AG04449 (cell line): ENCODE measurements at regions of chr17 and their contacts with region 1.

Region 1: GRCh38 chr17:17568749-17569195 is 22.7 kb downstream of the PEMT start:
- DNase-seq: no peak
- H3K4me3 ChIP-seq: no peak overlapping the region
- CTCF ChIP-seq: peak; percentile 88

Region 2: DNA sequence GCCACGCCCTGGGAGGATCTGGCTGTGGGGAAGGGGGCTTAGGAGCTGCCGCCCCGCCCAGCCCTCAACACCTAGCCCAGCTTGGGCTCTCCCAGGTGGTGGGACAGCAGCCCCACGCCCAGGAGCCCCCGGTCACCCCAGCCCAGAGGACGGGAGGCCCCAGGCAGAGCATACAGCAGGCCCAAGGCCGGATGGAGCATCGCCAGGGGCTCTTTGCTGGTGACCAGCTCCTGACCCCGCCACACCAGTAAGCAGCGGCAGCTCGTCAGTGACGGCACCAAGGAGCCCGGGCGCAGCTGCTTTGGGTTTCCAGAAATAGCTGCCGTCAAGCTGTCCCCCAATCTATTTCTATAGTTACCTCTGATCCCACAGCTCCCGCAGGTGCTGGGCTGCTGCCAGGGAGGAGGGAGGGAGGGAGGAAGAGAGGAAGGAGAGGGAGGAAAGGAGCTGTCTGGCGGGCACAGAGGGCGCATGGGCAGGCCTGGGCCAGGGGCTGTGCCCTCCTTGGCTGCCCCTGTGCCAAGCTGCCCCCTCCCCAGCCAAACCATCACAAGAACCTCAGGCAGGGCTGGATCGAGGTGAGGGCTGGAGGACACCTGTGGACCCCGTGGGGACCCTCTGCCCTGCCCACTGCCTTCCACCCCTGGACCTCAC is 61.8 kb before region 1 on chr17:
- CTCF ChIA-PET with region 1: interaction called, 11 read pairs
- POLR2A ChIA-PET with region 1: no interaction called
- DNase-seq: no peak
- H3K4me3 ChIP-seq: no peak overlapping the region
- CTCF ChIP-seq: no peak

Region 3: DNA sequence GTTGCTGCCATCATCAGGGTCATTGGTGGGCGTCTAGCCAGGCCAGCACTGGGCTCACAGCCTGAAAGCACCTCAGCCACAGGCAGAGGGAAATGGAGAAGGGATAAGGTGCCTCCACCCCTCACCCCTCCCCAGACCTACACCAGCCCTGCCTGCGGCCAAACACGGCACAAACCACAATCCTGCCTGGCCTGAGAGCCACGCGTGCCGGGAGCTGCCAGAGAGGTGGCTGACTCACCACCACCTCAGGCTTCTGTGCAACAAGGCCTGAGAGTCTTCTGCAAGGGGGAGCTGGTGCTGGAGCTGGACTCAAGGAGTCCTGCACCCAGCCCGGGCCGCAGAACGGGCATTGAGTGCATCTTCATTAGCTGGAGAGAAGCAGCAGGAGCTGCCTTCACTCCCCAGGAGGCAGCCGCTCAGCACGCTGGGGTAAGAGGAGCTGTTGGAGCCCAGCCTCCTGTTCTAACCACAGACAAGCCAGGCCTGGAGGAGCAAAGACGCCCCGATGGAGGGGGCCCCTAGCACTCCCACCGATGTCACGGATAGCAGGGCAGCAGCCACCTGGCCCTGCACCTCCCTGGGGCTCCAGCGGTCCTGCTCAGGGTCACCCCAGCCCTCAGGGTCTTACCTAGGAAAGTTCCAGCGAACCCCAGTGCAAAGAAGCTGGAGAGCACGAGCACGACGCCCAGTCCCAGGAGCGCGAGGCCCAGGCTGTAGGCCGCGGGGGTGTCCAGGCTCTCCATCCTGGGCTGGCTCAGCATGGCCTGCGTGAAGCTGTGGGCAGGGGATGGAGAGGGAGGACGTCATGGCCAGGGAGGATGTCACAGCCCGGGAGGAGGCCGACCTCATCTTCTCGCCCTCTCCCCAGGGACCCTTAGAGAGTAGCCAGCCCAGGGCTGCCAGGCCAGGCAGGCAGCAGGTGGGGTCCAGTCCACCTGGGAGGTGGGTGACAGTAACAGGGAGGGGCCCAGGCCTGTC is 56.6 kb before region 1 on chr17:
- CTCF ChIA-PET with region 1: interaction called, 22 read pairs
- POLR2A ChIA-PET with region 1: no interaction called
- DNase-seq: peak; percentile 75
- H3K4me3 ChIP-seq: no peak overlapping the region
- CTCF ChIP-seq: peak; percentile 10

Region 4: GRCh38 chr17:17545031-17545820 is 23.5 kb before region 1 on chr17:
- CTCF ChIA-PET with region 1: interaction called, 15 read pairs
- POLR2A ChIA-PET with region 1: no interaction called
- DNase-seq: no peak
- H3K4me3 ChIP-seq: no peak overlapping the region
- CTCF ChIP-seq: no peak

Region 5: DNA sequence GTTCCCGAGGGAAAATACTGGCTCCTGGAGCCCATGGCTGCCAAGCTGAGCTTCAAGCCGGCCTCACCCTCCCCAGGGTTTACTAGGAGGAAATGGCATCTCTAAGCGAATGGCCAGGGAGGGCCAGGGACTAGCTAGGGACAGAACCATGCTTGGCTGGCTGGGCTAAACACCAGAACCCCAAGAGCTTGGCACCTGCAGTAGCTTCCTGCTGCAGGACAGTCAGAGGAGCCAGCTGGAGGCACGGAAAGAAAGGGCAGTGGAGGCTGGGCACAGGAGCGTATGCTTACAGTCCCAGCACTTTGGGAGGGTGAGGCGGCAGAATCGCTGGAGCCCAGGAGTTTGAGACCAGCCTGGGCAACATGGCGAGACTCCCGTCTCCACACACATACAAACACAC is 11.0 kb before region 1 on chr17:
- CTCF ChIA-PET with region 1: interaction called, 39 read pairs
- POLR2A ChIA-PET with region 1: no interaction called
- DNase-seq: no peak
- H3K4me3 ChIP-seq: no peak overlapping the region
- CTCF ChIP-seq: no peak

Region 6: DNA sequence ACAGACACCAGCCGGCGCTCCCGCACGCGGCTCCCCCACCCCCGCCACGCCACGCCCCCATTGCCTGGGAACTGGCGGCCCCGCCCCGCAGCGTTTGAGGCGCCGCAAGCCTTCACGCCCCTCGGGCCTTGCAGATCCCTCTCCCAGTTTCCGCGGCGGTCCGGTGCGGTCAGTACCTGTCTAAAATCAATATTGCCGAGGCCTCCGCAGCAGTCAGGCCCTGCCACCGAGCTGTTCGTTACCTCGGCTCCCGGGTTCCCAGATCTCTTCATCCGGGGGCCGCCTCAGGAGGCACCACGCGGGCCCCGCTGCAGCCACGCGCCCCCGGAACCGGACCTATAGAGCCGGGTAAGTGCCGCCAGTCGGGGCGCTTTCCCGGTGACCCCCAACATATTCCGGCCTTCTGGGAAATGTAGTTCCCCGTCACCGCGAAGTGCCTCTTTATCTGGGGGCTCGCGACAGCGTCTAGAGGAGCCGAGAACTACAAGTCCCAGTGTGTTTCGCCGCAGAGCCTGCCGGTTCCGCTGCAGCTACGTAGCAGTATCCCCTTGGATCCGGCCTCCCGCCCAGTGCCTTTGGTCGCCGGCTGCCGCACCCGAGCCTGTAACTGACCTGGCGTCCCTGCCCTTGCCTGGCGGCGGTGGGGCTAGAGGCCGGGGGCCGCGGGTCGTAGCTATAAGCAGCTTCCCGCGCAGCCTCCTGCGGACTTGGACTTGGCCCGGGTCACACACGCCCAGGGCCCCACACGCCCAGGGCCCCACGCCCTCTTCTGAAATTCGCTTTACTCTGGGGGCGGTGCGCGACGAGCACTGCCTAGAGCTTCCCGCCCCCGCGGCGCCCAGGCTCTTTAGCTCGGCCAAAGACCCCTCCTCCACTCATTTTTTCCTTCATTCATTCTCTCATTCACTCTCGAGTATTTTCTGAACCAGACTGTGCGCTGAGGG is 22.9 kb after region 1 on chr17 and contains the start of gene PEMT:
- CTCF ChIA-PET with region 1: interaction called, 42 read pairs
- POLR2A ChIA-PET with region 1: no interaction called
- DNase-seq: peak; percentile 94
- H3K4me3 ChIP-seq: peak within 1 kb of the TSS; percentile 85
- CTCF ChIP-seq: no peak

Region 7: DNA sequence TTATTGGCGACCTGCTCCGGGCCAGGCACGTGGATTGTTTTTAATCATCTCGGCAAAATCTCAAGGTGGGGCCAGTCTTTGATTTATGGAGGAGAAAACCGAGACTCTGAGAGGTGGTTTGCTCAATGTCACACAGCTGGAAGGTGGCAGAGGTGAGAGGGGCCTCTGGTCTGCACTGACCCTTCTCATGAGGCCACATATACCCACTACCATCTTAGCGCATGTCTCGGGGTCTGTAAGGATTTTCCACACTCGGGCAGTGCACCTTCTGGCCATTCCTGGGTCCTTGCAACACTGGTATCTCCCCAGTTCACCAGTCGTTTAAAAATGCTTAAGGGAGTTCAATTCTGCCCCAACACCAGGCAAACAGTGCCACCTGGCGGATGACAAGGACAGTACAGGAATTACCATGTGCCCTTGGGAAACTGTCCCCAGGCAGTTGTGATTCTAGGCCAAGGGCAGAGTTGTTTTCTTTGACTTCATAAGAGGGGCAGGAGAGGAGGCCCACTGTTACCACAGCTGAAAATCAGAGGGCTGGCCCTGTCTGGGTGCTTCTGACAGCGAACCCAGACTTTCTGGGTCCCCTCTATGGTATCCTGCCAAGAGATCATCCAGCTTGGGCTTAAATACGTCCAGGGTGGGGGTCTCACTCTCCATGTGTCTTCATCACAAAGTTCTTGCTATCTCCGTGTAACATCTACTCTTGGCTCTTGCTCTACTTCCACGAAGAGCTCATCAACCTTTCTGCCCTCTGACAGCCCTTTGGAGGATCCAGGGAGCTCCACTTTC is 73.0 kb after region 1 on chr17:
- CTCF ChIA-PET with region 1: interaction called, 20 read pairs
- POLR2A ChIA-PET with region 1: no interaction called
- DNase-seq: peak; percentile 19
- H3K4me3 ChIP-seq: no peak overlapping the region
- CTCF ChIP-seq: peak; percentile 85

Region 8: DNA sequence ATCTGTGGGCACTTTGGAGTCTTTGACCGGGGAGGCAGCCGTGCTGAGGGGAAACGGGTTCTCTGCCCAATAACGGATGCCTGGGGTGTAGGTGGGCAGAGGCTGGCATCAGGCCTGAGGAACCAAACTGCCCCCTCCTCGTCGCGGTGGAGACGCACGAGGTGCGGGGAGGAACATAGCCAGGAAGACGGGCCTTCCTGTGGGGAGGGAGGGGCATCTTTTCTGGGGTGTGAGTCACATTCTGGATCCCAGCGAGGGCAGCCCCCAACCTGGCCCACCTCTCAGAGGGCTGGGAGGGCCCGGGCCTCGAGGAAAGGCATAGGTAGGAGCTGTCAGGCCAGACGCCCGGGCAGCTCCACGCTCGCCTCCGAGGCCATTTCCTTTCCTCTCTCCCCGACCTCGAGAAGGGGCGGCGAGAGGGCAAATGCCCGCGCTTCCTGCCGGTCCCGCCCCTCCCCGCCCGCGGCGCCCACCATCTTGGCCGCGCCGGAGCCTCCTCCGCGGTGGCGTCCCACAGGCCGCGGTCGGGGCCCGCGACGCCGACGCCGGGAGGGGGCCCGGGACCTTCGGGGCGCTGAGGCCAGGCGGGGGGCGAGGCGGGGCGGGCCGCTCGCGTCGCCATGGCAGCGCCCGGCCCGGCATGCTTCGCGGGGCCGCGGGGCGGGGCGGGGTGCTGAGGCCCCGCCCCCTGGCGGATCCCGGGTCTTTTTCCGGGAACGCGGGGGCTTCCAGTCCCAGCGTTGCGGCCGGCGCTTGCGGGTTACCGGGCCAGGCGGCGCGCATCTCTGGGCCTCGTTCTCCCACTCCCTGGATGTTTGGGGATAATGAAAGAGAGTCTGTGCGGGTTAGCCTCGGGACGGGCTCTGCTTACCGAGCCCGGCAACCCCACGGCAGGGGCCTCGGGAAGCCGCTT is 125.7 kb after region 1 on chr17:
- CTCF ChIA-PET with region 1: no interaction called
- POLR2A ChIA-PET with region 1: no interaction called
- DNase-seq: no peak
- H3K4me3 ChIP-seq: peak overlapping the region; percentile 67
- CTCF ChIP-seq: no peak

Region 9: DNA sequence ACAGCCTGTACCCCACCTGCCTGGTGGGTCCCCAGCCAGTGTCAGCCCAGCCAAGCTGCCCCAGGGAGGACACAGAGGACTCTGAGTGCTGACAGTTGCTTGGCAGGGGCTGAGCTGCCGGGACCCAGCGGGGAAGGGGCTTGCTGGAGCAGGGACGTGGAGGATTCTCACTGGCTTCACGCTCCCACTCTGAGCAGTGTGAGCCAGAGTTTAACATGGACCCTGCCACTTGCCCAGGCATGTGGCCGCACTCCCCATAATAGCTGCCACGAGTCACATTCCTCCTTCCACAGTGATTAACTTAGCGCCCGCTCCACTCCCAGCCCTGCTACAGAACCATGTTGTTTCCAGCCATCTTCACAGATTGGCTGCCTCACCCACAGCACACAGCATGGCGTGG is 236.8 kb after region 1 on chr17:
- CTCF ChIA-PET with region 1: no interaction called
- POLR2A ChIA-PET with region 1: no interaction called
- DNase-seq: no peak
- H3K4me3 ChIP-seq: no peak overlapping the region
- CTCF ChIP-seq: no peak